ENCODE measurements at regions of chr22 and their contacts with region 1.

Region 1: GRCh38 chr22:31148953-31149627 is 8.8 kb upstream of the PLA2G3 start:
- DNase-seq: peak; percentile 70 to 82
- H3K4me3 ChIP-seq: no peak overlapping the region
- H3K4me1 ChIP-seq: no peaks in the 10 kb centered on the region
- H3K27me3 ChIP-seq: no peaks in the 10 kb centered on the region

Region 2: GRCh38 chr22:30754971-30755756 is 393.9 kb before region 1 on chr22:
- in situ Hi-C with region 1: loop called (anchors 10 kb)
- DNase-seq: peak; percentile 12 to 32
- H3K4me3 ChIP-seq: no peak overlapping the region
- H3K4me1 ChIP-seq: no peaks in the 10 kb centered on the region
- H3K27me3 ChIP-seq: no peaks in the 10 kb centered on the region

Region 3: GRCh38 chr22:31199183-31199582 is 50.1 kb after region 1 on chr22:
- in situ Hi-C with region 1: no loop called
- DNase-seq: no peak
- H3K4me3 ChIP-seq: no peak overlapping the region
- H3K4me1 ChIP-seq: no peaks in the 10 kb centered on the region
- H3K27me3 ChIP-seq: no peaks in the 10 kb centered on the region